ENCODE measurements at regions of chr18 and their contacts with region 1.

Region 1: DNA sequence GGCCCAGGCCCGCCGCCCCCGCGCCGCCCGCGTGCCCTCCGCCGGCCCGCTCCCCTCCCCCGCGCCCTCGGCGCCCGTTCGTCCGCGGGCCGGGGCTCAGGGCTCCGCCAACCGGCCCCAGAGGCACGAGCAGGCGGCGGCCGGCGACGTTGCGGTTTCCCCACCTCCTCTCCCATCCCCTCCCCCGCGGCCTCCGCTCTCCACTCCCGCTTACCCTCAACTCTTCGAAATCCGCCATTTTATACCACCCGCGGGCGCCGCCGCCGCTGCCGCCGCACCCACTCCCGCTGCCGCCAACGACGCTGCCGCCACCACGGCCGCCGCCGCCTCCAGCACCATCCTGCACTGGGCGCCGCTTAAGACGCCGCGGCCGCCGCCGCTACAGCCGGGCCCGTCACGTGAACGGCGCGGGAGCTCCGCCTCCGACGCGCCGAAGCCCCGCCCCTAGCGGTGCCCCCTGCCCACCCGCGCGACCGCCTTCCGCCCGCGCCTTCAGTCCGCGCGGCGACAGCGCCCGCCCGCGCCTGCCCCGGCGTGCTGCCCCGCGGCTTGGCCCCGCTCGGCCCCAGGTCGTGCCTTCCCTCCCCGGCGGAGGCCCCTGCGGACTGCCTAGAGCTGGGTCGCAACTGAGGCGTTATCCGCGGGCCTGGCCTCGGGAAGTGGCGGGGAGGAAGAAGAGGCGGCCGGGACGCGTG is at the starts of genes KATNAL2 and PIAS2:
- DNase-seq: peak; percentile 68 to 91 (median 81)
- H3K4me3 ChIP-seq: peak within 1 kb of the TSS; percentile 43 to 93 (median 79)
- H3K27ac ChIP-seq: peak within 1 kb of the TSS; percentile 55 to 97 (median 93)
- H3K27me3 ChIP-seq: no peaks in the 10 kb centered on the region
- CTCF ChIP-seq: peak in 23 of 56 donors; percentile 15 to 61 (median 35)
- total RNA-seq, gene KATNAL2: 6.5 to 35.7 (median 17.6) TPM
- total RNA-seq, gene PIAS2: 56.7 to 117 (median 80.3) TPM

Region 2: DNA sequence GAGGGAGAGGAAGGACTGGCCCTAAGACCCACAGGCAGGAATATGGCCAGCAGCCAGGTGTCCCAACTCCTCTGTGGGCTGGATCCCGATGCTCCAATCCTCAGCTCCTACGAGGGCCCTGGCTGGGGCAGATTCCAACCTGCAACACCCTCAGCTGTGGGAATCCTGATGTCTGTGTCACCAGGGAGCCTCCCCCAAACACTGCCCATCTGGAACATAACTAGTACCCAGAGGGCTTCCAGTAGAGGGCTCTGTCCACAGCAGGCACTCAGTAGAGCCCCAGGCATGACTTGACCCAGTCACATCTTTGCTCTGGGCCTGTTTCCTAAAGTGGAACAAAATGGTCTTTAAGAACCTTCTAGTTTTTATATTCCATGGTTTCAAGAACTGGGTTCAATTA is 239.6 kb before region 1 on chr18:
- intact Hi-C with region 1: loop called in 1 of 2 experiments (anchors 10 kb)
- DNase-seq: no peak
- H3K4me3 ChIP-seq: no peak overlapping the region
- H3K27ac ChIP-seq: peak overlapping the region in 1 of 59 donors; percentile 37
- H3K27me3 ChIP-seq: no peaks in the 10 kb centered on the region
- CTCF ChIP-seq: peak in 20 of 56 donors; percentile 6 to 44 (median 14)

Measured in dorsolateral prefrontal cortex (tissue), 120 donors.